Heart right ventricle (tissue), 16 donors: ENCODE measurements at regions of chr1 and their contacts with region 1.

Region 1: GRCh38 chr1:33460947-33461629 is 11.4 kb upstream of the ZSCAN20 start:
- DNase-seq: peak; percentile 44 to 77
- ATAC-seq: peak; percentile 61 to 87 (median 75)
- H3K4me3 ChIP-seq: no peak overlapping the region
- H3K27ac ChIP-seq: peak overlapping the region; percentile 59 to 93 (median 84)
- H3K4me1 ChIP-seq: peaks cover 2 to 74% (median 35%) of the 10 kb centered on the region in 9 donors
- H3K27me3 ChIP-seq: no peaks in the 10 kb centered on the region
- CTCF ChIP-seq: no peak

Region 2: DNA sequence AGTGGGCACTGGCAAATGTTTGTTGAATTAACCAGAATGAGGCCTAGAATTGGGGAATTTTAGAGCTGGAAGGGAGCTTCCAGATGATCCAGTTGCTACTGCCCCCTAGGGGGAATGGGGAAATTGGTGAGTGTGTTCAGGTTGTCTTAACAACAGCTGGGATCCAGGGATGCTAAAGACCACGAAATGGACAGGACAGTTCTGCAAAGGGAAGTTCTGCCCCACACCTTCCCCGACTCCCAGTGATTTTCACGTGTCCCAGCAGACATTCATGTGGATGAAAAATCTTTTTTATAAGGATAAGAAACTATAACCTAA is 313.1 kb before region 1 on chr1:
- intact Hi-C with region 1: loop called in 1 of 10 experiments (anchors 10 kb)
- DNase-seq: no peak
- ATAC-seq: no peak
- H3K4me3 ChIP-seq: no peak overlapping the region
- H3K27ac ChIP-seq: no peak overlapping the region
- H3K4me1 ChIP-seq: peaks cover 7 to 31% (median 23%) of the 10 kb centered on the region in 9 donors
- H3K27me3 ChIP-seq: no peaks in the 10 kb centered on the region
- CTCF ChIP-seq: peak in 2 of 9 donors; percentile 16 to 26

Region 3: GRCh38 chr1:33256701-33257399 is 204.2 kb before region 1 on chr1:
- intact Hi-C with region 1: no loop called
- DNase-seq: peak; percentile 53 to 60
- ATAC-seq: peak; percentile 32 to 56 (median 40)
- H3K4me3 ChIP-seq: peak overlapping the region; percentile 61 to 86 (median 75)
- H3K27ac ChIP-seq: peak overlapping the region; percentile 79 to 94 (median 88)
- H3K4me1 ChIP-seq: peaks cover 35 to 56% (median 53%) of the 10 kb centered on the region in 9 donors
- H3K27me3 ChIP-seq: no peaks in the 10 kb centered on the region
- CTCF ChIP-seq: no peak